ENCODE measurements at regions of chr9 and their contacts with region 1.

Region 1: GRCh38 chr9:33264473-33265177 is at the starts of genes BAG1 and CHMP5:
- DNase-seq: peak; percentile 100
- total RNA-seq, gene BAG1: 73.8 to 103 TPM
- total RNA-seq, gene CHMP5: 54.2 to 61.7 TPM

Region 2: GRCh38 chr9:32728181-32728580 is 536.4 kb before region 1 on chr9:
- intact Hi-C with region 1: no loop called
- DNase-seq: no peak

Region 3: GRCh38 chr9:33225319-33226149 is 39.1 kb before region 1 on chr9:
- intact Hi-C with region 1: no loop called
- DNase-seq: no peak

Region 4: GRCh38 chr9:33291901-33292300 is 27.3 kb after region 1 on chr9:
- intact Hi-C with region 1: loop called in 1 of 2 experiments (anchors 1 kb)
- DNase-seq: no peak

Region 5: DNA sequence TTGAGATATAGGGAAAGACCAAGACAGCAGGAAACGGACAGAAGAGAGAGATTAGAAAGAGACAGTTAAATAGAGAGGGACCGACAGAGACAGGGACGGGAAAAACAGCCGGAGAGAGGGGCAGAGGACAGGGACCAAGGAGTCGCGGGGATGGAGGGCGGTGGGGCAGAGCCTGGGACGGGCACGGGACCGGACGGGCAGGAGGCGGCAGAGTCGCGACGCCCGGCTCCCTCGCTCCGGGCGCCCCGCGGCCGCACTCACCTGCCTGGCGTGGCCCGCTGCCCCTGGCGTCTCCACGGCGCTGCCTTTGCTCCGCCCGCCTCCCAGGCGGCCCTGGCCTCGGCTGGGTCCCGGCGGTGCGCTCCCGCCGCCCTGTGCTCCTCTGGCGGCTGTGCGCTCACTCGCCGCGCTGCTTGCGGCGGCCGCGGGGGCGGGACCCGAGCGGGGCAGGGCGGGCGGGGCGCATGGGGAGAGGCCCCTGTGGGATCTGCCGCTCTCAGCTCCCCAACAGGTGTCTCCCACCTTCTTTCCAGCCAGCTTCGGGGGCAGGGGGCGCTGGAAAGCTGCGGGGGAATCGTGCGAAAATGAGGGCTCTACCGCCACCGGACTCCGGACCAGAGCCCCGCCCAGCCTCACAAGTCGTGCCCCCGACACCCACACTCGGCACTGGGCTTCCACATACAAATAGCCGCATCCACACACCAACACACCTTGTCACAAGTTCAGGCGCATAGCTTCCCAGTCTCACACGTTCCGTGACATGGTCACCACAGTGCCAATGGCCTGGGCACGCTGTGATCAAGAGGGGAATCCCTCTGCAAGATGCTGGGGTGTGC is 1364.2 kb after region 1 on chr9 and contains the start of gene ARID3C:
- intact Hi-C with region 1: loop called in 1 of 2 experiments (anchors 5 kb)
- DNase-seq: no peak
- total RNA-seq, gene ARID3C: not detected

Measured in posterior vena cava (tissue), 2 donors.